Thyroid gland (tissue), 4 donors: ENCODE measurements at regions of chr21 and their contacts with region 1.

Region 1: DNA sequence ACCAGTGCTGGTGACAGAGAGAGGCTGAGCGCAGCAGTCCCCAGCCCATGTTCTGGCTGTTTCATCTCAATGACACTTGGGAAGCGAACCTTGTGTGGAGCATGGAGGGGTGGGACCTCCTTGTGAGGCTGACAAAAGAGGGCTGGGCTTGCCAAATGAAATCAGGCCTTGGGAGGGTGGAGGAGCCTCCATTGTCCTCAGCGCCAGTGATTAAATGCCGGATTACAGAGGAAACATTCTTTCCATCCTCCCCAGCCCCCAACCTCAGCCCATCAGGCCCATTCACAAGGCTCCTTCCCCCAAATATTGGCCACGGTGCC is 63.3 kb upstream of the PAXBP1 start:
- DNase-seq: no peak
- H3K4me3 ChIP-seq: no peak overlapping the region
- H3K27ac ChIP-seq: no peak overlapping the region
- H3K4me1 ChIP-seq: no peaks in the 10 kb centered on the region
- H3K27me3 ChIP-seq: no peaks in the 10 kb centered on the region
- CTCF ChIP-seq: no peak
- POLR2A ChIP-seq: no peak

Region 2: DNA sequence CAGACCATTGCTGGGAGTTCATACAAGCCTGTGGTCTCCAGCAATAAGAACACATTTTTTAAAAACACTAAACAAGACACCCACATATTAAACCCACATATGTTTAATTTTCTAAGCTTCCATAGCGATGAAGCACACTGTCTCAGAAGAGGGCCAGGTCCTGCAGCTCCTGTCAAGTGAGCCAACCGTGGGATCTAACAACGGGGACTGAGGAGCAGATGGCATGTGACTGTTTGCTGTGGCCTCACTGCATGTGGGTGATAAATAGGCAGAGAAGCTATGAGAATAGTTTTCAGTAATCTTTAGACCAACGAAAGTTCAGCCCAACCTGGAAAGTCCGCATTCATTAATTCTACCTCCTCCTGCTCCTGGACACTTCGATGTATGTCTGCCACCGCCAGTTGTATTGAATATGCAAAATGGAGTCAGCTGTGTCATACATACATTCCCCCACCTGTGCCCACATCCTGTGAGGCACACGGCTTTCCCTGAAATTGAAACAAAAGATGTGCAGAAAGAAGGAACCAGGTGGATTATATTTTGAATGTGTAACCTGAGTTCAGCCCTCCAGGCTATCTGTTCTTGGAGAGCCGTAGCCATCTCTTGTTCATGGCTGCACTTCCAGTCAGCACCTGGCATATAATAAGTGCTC is 644.3 kb before region 1 on chr21:
- intact Hi-C with region 1: no loop called
- DNase-seq: no peak
- H3K4me3 ChIP-seq: no peak overlapping the region
- H3K27ac ChIP-seq: no peak overlapping the region
- H3K4me1 ChIP-seq: no peaks in the 10 kb centered on the region
- H3K27me3 ChIP-seq: no peaks in the 10 kb centered on the region
- CTCF ChIP-seq: no peak
- POLR2A ChIP-seq: no peak

Region 3: DNA sequence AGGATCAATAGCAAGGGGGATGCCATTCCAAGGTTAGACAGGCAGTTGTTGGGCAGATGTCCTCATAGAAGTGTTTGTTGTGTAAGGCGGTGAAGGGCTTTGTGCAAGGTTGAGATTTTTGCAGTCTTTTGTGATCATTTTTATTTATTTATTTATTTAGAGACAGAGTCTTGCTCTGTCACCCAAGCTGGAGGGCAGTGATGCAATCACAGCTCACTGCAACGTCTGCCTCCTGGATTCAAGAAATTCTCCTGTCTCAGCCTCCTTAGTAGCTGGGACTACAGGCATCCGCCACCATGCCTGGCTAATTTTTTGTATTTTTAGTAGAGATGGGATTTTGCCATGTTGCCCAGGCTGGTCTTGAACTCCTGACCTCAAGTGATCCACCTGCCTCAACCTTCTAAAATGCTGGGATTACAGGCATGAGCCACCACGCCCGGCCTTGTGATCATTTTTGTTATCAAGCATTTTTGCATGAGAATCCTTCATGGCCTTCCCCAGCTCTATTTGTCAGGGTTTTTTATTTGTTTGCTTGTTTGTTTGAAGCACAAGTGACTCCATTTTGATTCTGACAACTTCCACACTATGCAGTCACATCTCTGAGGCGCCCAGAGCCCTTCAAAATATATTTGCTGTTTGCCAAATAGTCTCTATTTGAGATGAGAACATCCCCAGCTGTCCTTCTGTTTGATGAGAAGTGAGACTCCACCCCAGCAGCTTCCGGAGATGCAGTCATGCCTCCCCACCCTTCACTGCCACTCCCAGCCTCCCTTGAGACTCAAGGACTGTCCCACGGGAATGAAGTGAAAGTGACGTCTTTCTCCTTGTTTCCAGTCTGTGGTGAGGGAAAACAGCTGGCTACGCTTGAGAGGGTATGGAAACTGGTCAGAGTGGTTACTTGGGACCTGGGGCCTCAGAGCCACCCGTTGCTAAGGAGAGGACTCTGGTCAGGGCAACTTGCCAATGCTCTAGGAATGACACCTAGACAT is 606.9 kb after region 1 on chr21:
- intact Hi-C with region 1: loop called (anchors 10 kb)
- DNase-seq: peak; percentile 93
- H3K4me3 ChIP-seq: no peak overlapping the region
- H3K27ac ChIP-seq: peak overlapping the region; percentile 77 to 97 (median 95)
- H3K4me1 ChIP-seq: peaks cover 34 to 42% of the 10 kb centered on the region in 2 donors
- H3K27me3 ChIP-seq: no peaks in the 10 kb centered on the region
- CTCF ChIP-seq: no peak
- POLR2A ChIP-seq: peak in 1 of 2 donors; percentile 37